Astrocyte of the cerebellum (primary cell): ENCODE measurements at regions of chr11 and their contacts with region 1.

Region 1: DNA sequence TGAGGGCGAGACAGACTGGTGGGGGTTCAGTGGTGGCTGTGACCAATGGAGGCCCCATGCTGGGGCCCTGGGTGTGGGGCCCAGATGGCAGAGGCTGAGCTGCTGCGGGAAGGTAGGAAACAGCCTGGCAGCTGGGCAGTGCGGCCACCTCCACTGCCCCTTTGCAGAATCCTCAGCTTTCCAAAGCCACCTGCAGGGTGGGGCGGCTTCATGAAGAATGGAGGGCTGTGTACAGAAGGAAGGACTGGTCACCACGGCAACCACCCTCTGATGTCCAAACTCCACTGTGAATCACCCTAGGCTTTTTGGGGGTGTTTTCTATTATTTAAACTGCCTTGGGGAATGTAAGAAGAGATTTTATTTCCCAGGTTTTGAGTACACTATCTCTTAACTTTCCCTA is 166.3 kb upstream of the NAV2 start:
- DNase-seq: no peak
- H3K4me3 ChIP-seq: no peak overlapping the region
- CTCF ChIP-seq: no peak

Region 2: DNA sequence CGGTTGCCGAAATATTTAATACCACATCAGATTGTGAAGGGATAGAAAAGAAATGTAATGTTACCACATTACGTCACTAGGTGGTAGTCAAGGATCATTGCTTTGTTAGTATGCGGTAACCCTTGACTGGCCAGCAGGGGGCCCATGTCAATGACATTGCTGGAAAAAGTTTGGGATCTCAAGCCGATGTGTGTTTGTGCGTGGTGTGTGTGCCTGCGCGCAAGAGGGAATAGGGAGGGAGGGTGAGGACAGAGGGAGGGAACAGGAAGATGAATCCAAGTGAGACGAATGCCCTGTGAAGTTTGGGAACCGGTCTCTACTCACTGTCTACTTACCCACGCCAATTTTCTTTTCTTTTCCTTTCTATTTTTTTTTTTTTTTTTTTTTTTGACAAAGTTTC is 475.1 kb before region 1 on chr11:
- in situ Hi-C with region 1: loop called (anchors 10 kb)
- DNase-seq: peak; percentile 68
- H3K4me3 ChIP-seq: peak overlapping the region; percentile 19
- CTCF ChIP-seq: peak; percentile 96

Region 3: DNA sequence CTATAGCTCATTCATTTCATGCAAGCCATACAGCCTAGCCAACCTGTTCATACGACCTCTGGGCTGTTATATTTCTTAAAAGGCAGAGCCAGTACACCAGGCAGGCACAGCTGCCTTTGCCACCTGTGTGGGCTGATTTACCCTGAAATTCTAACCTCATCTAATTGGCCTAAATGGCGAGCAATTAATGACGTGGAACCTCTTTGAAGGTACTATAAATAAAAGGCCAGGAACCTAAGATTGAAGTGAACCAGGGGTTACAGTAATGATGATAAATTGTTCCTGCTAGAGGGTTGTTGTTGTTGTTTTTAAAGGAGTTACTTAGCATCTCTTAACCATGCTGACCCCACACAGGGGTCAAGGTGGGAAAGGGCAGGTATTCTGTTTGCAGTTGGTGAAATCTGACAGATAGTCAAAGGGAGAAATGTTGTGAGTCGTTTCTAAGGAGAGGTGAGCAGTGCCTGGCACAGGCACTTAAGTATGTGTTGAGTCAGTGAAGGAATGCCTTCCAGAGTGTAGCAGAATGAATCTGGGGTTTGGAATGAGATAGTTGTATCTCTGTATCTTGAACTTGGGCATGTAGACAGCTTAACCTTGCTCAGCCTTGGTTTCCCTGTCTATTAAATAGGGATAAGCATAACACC is 47.2 kb before region 1 on chr11:
- in situ Hi-C with region 1: no loop called
- DNase-seq: no peak
- H3K4me3 ChIP-seq: no peak overlapping the region
- CTCF ChIP-seq: no peak